ENCODE measurements at regions of chr4 and their contacts with region 1.

Region 1: GRCh38 chr4:17552427-17552826 is 24.6 kb upstream of the LAP3 start:
- DNase-seq: no peak
- H3K4me3 ChIP-seq: no peak overlapping the region
- H3K27ac ChIP-seq: no peak overlapping the region
- H3K4me1 ChIP-seq: no peaks in the 10 kb centered on the region
- H3K27me3 ChIP-seq: no peaks in the 10 kb centered on the region
- CTCF ChIP-seq: no peak

Region 2: GRCh38 chr4:17726925-17727324 is 174.5 kb after region 1 on chr4:
- intact Hi-C with region 1: no loop called
- DNase-seq: no peak
- H3K4me3 ChIP-seq: no peak overlapping the region
- H3K27ac ChIP-seq: no peak overlapping the region
- H3K4me1 ChIP-seq: no peaks in the 10 kb centered on the region
- H3K27me3 ChIP-seq: no peaks in the 10 kb centered on the region
- CTCF ChIP-seq: no peak

Region 3: DNA sequence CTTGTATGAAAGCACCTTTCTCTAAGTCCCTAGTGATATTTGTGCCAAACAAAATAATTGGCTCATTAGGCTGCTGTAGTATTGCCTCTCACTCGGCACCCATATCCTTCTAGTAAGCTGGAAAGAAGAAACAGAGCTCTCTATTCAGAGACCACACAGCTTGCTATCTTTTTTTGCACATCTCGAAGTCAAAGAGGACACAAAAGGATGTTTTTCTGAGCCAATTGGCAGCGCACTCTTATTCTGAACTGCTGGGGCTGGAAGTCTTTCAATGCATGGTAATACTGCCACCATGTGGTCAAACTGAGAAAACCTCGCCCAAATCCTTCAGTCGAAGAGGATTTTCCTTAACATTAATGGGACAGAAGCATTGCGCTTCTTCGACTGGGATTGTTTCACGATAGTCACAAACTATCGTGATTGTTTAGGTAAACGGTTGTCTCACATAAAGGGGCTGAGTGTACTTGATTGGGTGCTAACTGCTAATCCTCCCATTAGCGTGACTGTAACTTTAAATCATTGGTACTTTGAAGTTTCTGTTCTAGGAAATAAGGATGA is 1041.1 kb after region 1 on chr4:
- intact Hi-C with region 1: loop called (anchors 10 kb)
- DNase-seq: peak in 4 of 5 donors; percentile 67 to 91 (median 78)
- H3K4me3 ChIP-seq: no peak overlapping the region
- H3K27ac ChIP-seq: no peak overlapping the region
- H3K4me1 ChIP-seq: no peaks in the 10 kb centered on the region
- H3K27me3 ChIP-seq: no peaks in the 10 kb centered on the region
- CTCF ChIP-seq: peak; percentile 83